Right ventricle myocardium superior (tissue), 1 donor: ENCODE measurements at regions of chr6 and their contacts with region 1.

Region 1: GRCh38 chr6:108947114-108947854 is 99.1 kb downstream of the ARMC2 start:
- DNase-seq: no peak
- ATAC-seq: peak; percentile 30

Region 2: GRCh38 chr6:108896111-108896661 is 51.1 kb before region 1 on chr6:
- intact Hi-C with region 1: loop called (anchors 5 kb)
- DNase-seq: no peak
- ATAC-seq: peak; percentile 28

Region 3: GRCh38 chr6:108995309-108995708 is 48.0 kb after region 1 on chr6:
- intact Hi-C with region 1: loop called (anchors 2 kb)
- DNase-seq: no peak
- ATAC-seq: no peak